ENCODE measurements at regions of chr19 and their contacts with region 1.

Region 1: GRCh38 chr19:45059278-45059965 is 16.9 kb downstream of the ZNF296 start:
- DNase-seq: peak; percentile 85
- H3K4me3 Mint-ChIP-seq: no peak overlapping the region
- H3K27ac Mint-ChIP-seq: peak overlapping the region; percentile 53
- H3K4me1 Mint-ChIP-seq: peaks cover 2% of the 10 kb centered on the region
- H3K27me3 Mint-ChIP-seq: no peaks in the 10 kb centered on the region

Region 2: DNA sequence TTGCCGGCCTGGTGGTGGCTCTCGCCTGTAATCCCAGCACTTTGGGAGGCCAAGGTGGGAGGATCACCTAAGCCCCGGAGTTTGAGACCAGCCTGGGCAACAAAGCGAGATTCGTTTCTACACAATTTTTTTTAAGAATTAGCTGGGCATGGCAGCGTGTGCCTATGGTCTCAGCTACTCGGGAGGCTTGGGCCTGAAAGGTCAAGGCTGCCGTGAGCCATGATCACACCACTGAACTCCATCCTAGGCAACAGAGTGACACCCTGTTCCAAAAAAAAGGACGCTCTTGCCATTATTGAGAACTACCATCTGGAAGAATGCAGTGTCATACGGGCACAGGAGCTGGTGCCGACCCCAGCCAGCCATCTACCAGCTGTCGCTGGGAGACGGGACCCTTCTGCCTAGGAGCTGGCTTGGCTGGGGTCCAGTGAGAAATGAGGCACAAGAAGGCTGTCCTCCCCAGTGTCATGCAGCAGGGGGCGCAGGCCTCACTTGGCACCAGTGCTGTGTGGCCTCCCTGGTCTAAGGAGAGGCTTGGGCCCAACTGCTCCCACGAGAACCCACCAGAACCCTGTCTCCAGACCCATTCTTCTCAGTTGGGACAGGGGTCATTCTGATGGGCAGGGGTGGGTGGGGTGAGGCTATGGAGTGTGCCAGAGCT is 70.4 kb before region 1 on chr19:
- CTCF ChIA-PET with region 1: interaction called, 13 read pairs
- POLR2A ChIA-PET with region 1: interaction called, 3 read pairs
- DNase-seq: peak; percentile 71
- H3K4me3 Mint-ChIP-seq: no peak overlapping the region
- H3K27ac Mint-ChIP-seq: no peak overlapping the region
- H3K4me1 Mint-ChIP-seq: no peaks in the 10 kb centered on the region
- H3K27me3 Mint-ChIP-seq: no peaks in the 10 kb centered on the region

Region 3: DNA sequence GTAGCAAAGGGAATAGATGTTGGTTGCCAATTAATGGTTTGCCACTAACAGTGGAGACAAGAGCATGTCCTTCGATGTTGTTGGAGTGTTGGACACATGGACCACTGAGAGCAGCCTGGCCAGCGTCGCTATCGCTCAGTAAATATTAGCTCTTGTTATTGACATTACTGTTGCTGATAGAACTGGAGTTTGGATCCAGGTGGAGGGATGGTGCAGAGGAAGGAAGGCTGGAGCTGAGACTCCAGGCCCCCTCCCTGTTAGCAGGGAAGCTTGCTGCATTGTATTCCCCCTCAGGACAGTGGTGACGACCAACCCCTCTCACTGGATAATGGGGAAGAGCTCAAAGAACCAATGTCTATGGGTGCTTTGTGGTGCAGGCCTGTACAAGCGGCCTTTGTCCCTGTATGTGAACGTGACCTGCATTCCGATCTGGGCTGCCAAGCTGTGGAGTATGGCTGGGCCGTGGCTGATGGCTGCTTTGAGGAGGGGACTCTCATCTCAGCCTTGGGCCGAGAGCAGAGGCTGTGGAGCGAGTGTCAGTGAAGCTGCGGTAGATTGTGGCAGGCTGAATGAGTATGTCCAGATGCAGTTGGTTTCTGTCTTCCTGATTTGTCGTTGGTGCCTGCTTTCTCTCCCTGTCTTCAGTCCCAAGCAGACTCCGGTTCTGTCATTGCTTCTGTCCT is 13.6 kb before region 1 on chr19:
- CTCF ChIA-PET with region 1: interaction called, 35 read pairs
- POLR2A ChIA-PET with region 1: no interaction called
- DNase-seq: no peak
- H3K4me3 Mint-ChIP-seq: no peak overlapping the region
- H3K27ac Mint-ChIP-seq: peak overlapping the region; percentile 49
- H3K4me1 Mint-ChIP-seq: peaks cover 45% of the 10 kb centered on the region
- H3K27me3 Mint-ChIP-seq: no peaks in the 10 kb centered on the region

Region 4: GRCh38 chr19:45079063-45079910 is 19.9 kb after region 1 on chr19 and contains the start of gene GEMIN7:
- CTCF ChIA-PET with region 1: interaction called, 14 read pairs
- POLR2A ChIA-PET with region 1: interaction called, 5 read pairs
- DNase-seq: peak; percentile 83
- H3K4me3 Mint-ChIP-seq: peak within 1 kb of the TSS; percentile 96
- H3K27ac Mint-ChIP-seq: peak within 1 kb of the TSS; percentile 83
- H3K4me1 Mint-ChIP-seq: peaks cover 56% of the 10 kb centered on the region
- H3K27me3 Mint-ChIP-seq: no peaks in the 10 kb centered on the region
- total RNA-seq, gene GEMIN7: 31.7 to 35.5 TPM

Measured in activated CD4-positive, alpha-beta memory T cell treated with anti-CD3 and anti-CD28 coated beads, Interleukin-2, amount 10 ng/mL, durations not matched to agents 7 days and 5 days (primary cell).